ENCODE measurements at regions of chr1 and their contacts with region 1.

Region 1: GRCh38 chr1:231757101-231757404 is 130.5 kb downstream of the DISC1 start:
- DNase-seq: no peak
- ATAC-seq: peak; percentile 57
- H3K4me3 ChIP-seq: no peak overlapping the region
- H3K27ac ChIP-seq: no peak overlapping the region
- H3K4me1 ChIP-seq: no peaks in the 10 kb centered on the region
- H3K27me3 ChIP-seq: no peaks in the 10 kb centered on the region; a peak in 1 of 4 replicates
- CTCF ChIP-seq: no peak
- EP300 ChIP-seq: no peak
- POLR2A ChIP-seq: no peak
- RAD21 ChIP-seq: no peak

Region 2: DNA sequence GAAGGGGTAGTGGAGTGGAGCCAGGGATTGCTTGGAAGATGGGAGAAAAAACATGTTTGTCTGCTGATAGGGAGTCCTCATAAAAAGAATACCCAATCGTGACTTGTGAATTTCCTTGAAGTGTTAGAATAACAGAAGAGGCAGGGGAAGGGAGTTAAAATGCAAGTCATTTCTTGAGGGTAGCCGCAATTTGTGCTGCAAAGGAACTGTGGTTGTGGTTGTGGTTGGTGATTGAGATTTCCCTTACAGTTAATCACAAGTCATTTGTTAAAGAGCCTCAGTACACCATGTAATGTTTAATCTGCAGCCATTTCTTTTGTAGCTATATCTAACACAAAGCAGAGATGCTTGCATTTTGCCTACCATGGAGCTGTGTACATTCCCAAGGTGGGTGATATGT is 296.4 kb before region 1 on chr1:
- CTCF ChIA-PET with region 1: no interaction called
- POLR2A ChIA-PET with region 1: no interaction called
- RAD21 ChIA-PET with region 1: no interaction called
- SMC1A ChIA-PET with region 1: no interaction called
- in situ Hi-C with region 1: no loop called
- intact Hi-C with region 1: no loop called
- DNase-seq: peak; percentile 40
- ATAC-seq: peak; percentile 94
- H3K4me3 ChIP-seq: no peak overlapping the region
- H3K27ac ChIP-seq: no peak overlapping the region
- H3K4me1 ChIP-seq: no peaks in the 10 kb centered on the region
- H3K27me3 ChIP-seq: no peaks in the 10 kb centered on the region
- CTCF ChIP-seq: no peak
- EP300 ChIP-seq: peak in 1 of 2 experiments; percentile 41; a peak in 1 of 4 replicates
- POLR2A ChIP-seq: no peak
- RAD21 ChIP-seq: no peak

Region 3: DNA sequence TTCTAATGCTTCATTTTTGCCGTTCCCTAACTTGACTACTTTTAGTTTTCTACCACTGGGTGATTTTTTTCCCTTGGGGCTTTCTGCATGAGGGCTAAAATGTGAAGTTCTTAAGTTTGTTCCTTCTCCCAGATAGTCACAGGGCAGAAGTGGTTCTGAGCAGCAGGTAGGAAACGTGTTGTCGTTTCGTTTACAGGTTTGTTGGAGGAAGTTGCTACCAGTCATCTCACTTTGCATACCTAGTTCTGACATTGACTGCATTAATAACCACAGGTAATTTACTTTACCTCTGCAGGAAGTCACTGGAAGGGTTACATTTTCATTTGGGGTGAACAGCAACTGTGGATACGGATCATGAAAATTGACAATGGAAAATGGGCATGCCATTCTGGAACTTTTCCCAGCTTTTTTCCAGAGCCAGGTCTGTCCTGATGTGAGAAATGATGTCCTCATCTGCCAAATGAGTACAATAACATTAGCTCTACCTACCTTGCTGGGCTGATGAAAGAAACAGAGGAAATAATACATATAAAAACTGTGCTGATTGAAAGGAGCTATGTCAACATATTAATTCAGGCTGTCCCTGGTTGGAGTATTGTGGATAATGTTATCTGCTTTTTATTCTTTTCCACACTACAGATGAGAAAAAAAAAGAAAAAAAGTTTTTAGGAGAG is 36.3 kb before region 1 on chr1:
- CTCF ChIA-PET with region 1: no interaction called
- POLR2A ChIA-PET with region 1: no interaction called
- RAD21 ChIA-PET with region 1: no interaction called
- SMC1A ChIA-PET with region 1: no interaction called
- in situ Hi-C with region 1: no loop called
- intact Hi-C with region 1: no loop called
- DNase-seq: no peak
- ATAC-seq: no peak
- H3K4me3 ChIP-seq: no peak overlapping the region
- H3K27ac ChIP-seq: no peak overlapping the region
- H3K4me1 ChIP-seq: no peaks in the 10 kb centered on the region
- H3K27me3 ChIP-seq: no peaks in the 10 kb centered on the region
- CTCF ChIP-seq: no peak
- EP300 ChIP-seq: no peak
- POLR2A ChIP-seq: no peak
- RAD21 ChIP-seq: no peak

Region 4: GRCh38 chr1:231743966-231744365 is 13.1 kb before region 1 on chr1:
- CTCF ChIA-PET with region 1: interaction called, 26 read pairs
- POLR2A ChIA-PET with region 1: no interaction called
- RAD21 ChIA-PET with region 1: no interaction called
- SMC1A ChIA-PET with region 1: no interaction called
- in situ Hi-C with region 1: no loop called
- intact Hi-C with region 1: no loop called
- DNase-seq: no peak
- ATAC-seq: no peak
- H3K4me3 ChIP-seq: no peak overlapping the region
- H3K27ac ChIP-seq: no peak overlapping the region
- H3K4me1 ChIP-seq: no peaks in the 10 kb centered on the region
- H3K27me3 ChIP-seq: no peaks in the 10 kb centered on the region; a peak in 1 of 4 replicates
- CTCF ChIP-seq: no peak
- EP300 ChIP-seq: no peak
- POLR2A ChIP-seq: no peak
- RAD21 ChIP-seq: no peak

Region 5: GRCh38 chr1:231770506-231771175 is 13.6 kb after region 1 on chr1:
- CTCF ChIA-PET with region 1: interaction called, 41 read pairs
- POLR2A ChIA-PET with region 1: interaction called, 4 read pairs
- RAD21 ChIA-PET with region 1: interaction called, 3 read pairs
- SMC1A ChIA-PET with region 1: interaction called, 3 read pairs
- in situ Hi-C with region 1: no loop called
- intact Hi-C with region 1: no loop called
- DNase-seq: no peak
- ATAC-seq: no peak
- H3K4me3 ChIP-seq: no peak overlapping the region
- H3K27ac ChIP-seq: no peak overlapping the region
- H3K4me1 ChIP-seq: no peaks in the 10 kb centered on the region
- H3K27me3 ChIP-seq: no peaks in the 10 kb centered on the region; a peak in 1 of 4 replicates
- CTCF ChIP-seq: no peak
- EP300 ChIP-seq: no peak
- POLR2A ChIP-seq: no peak
- RAD21 ChIP-seq: no peak

Region 6: GRCh38 chr1:231806623-231807495 is 49.8 kb after region 1 on chr1:
- CTCF ChIA-PET with region 1: interaction called, 15 read pairs
- POLR2A ChIA-PET with region 1: no interaction called
- RAD21 ChIA-PET with region 1: interaction called, 13 read pairs
- SMC1A ChIA-PET with region 1: interaction called, 3 read pairs
- in situ Hi-C with region 1: no loop called
- intact Hi-C with region 1: loop called (anchors 1 kb)
- DNase-seq: no peak
- ATAC-seq: peak; percentile 100
- H3K4me3 ChIP-seq: no peak overlapping the region
- H3K27ac ChIP-seq: no peak overlapping the region
- H3K4me1 ChIP-seq: no peaks in the 10 kb centered on the region
- H3K27me3 ChIP-seq: no peaks in the 10 kb centered on the region; a peak in 1 of 4 replicates
- CTCF ChIP-seq: peak; percentile 70 to 77 (median 73)
- EP300 ChIP-seq: no peak
- POLR2A ChIP-seq: no peak
- RAD21 ChIP-seq: peak; percentile 70

Region 7: DNA sequence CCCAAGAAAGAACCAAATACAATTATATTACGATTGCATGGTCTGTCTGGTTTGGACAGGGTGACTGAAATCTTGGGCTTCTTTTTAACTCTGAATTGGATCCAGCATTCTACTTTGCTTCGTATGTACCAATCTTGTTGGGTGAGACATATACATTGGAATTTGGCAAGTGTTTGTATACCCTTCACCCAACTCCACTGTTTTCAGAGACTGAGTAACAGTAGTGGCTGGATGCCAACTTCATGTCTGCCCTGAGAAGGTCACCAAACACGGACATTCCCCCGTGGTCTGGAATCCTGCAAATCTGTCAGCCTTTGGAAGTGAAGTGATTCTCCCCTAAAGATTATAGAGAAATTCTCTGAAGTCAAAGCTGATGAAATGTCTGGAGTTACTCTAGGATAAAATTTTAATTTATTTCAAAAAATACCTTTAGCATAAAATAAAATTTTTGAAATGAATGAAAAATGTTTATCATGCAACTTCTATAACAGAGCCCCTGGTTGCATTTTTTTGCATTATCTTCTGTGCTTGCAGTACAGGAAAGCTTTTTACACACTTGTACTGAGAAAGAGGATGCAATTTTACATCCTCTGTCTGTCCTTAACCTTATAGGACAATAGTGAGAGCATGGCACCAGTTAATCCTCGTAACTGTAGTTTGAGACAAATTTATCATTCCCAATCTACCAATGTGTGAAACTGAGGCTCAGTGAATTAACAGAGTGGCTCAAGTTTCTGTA is 71.3 kb after region 1 on chr1:
- CTCF ChIA-PET with region 1: no interaction called
- POLR2A ChIA-PET with region 1: no interaction called
- RAD21 ChIA-PET with region 1: no interaction called
- SMC1A ChIA-PET with region 1: no interaction called
- in situ Hi-C with region 1: no loop called
- intact Hi-C with region 1: no loop called
- DNase-seq: no peak
- ATAC-seq: no peak
- H3K4me3 ChIP-seq: no peak overlapping the region
- H3K27ac ChIP-seq: no peak overlapping the region
- H3K4me1 ChIP-seq: no peaks in the 10 kb centered on the region
- H3K27me3 ChIP-seq: no peaks in the 10 kb centered on the region
- CTCF ChIP-seq: no peak
- EP300 ChIP-seq: no peak
- POLR2A ChIP-seq: no peak
- RAD21 ChIP-seq: no peak